H1 (cell line): ENCODE measurements at regions of chr6 and their contacts with region 1.

Region 1: GRCh38 chr6:5214570-5215052 is 46.1 kb downstream of the LYRM4 start:
- DNase-seq: peak; percentile 41 to 90
- H3K4me3 ChIP-seq: no peak overlapping the region
- H3K27ac ChIP-seq: no peak overlapping the region
- H3K4me1 ChIP-seq: 0 out of 7 replicates have a peak, but pooled peaks cover 0 to 2% (median 0%) of the 10 kb centered on the region in 4 experiments
- H3K27me3 ChIP-seq: no peaks in the 10 kb centered on the region
- CTCF ChIP-seq: peak; percentile 96 to 100 (median 98)
- EP300 ChIP-seq: no peak
- POLR2A ChIP-seq: no peak
- RAD21 ChIP-seq: peak; percentile 98 to 99

Region 2: GRCh38 chr6:5054245-5054873 is 160.3 kb before region 1 on chr6:
- CTCF ChIA-PET with region 1: interaction called, 11 read pairs
- POLR2A ChIA-PET with region 1: no interaction called
- DNase-seq: no peak
- H3K4me3 ChIP-seq: no peak overlapping the region
- H3K27ac ChIP-seq: no peak overlapping the region
- H3K4me1 ChIP-seq: no peaks in the 10 kb centered on the region
- H3K27me3 ChIP-seq: no peaks in the 10 kb centered on the region
- CTCF ChIP-seq: no peak
- EP300 ChIP-seq: no peak
- POLR2A ChIP-seq: no peak
- RAD21 ChIP-seq: no peak